Left lung (tissue), 14 donors: ENCODE measurements at regions of chr18 and their contacts with region 1.

Region 1: GRCh38 chr18:26548429-26549262 is at the start of gene KCTD1:
- DNase-seq: peak; percentile 76 to 87 (median 86)
- ATAC-seq: peak; percentile 58
- H3K4me3 ChIP-seq: peak within 1 kb of the TSS; percentile 60 to 67
- H3K27ac ChIP-seq: peak within 1 kb of the TSS; percentile 40 to 76
- H3K4me1 ChIP-seq: peaks cover 17 to 46% of the 10 kb centered on the region in 2 donors
- H3K27me3 ChIP-seq: peaks cover 31 to 69% of the 10 kb centered on the region in 2 donors
- CTCF ChIP-seq: no peak
- polyA plus RNA-seq, gene KCTD1: 15.0 to 20.8 (median 16.8) TPM

Region 2: DNA sequence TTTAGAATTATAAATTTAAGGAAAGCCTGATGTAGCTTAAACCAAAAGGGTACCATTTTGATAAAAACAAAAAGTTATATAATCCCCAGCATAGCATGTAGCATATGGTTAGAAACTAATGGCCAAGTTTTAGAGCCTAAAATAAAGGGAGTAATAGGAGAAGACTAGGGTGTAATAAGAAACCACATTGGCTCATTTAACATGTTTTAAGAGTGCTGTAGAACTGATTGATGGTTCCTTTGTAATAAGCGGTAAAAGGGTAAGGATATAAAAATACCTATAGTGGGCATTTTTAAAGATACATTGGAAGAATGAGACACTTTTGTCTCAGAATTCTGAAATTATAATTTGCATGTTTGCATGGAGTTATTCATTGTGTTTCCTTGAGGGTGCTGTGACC is 413.1 kb before region 1 on chr18:
- intact Hi-C with region 1: no loop called
- DNase-seq: no peak
- ATAC-seq: no peak
- H3K4me3 ChIP-seq: no peak overlapping the region
- H3K27ac ChIP-seq: no peak overlapping the region
- H3K4me1 ChIP-seq: no peaks in the 10 kb centered on the region
- H3K27me3 ChIP-seq: no peaks in the 10 kb centered on the region
- CTCF ChIP-seq: no peak

Region 3: DNA sequence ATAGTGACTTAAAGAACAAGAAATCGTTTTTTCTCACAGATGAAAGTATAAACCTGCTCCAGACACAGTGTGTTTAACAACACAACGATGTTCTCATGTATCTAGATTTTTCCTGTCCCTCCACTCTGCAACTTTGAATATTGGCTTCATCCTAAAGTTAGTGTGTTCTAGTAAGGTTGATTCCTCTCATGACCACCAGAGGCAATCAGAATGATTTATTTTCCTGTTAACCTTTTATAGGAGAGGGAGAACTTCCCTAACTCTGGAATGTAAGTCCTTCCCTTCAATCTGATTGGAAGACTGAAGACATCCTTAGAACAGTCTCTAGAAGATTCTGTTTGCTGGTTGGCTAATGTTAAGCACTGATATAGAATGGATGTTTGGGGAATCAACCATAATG is 363.4 kb before region 1 on chr18:
- intact Hi-C with region 1: no loop called
- DNase-seq: no peak
- ATAC-seq: no peak
- H3K4me3 ChIP-seq: no peak overlapping the region
- H3K27ac ChIP-seq: no peak overlapping the region
- H3K4me1 ChIP-seq: no peaks in the 10 kb centered on the region
- H3K27me3 ChIP-seq: no peaks in the 10 kb centered on the region
- CTCF ChIP-seq: no peak

Region 4: GRCh38 chr18:26656944-26657536 is 108.4 kb after region 1 on chr18:
- intact Hi-C with region 1: loop called in 1 of 2 experiments (anchors 10 kb)
- DNase-seq: peak; percentile 63 to 95 (median 81)
- ATAC-seq: peak; percentile 79
- H3K4me3 ChIP-seq: peak overlapping the region; percentile 52 to 60
- H3K27ac ChIP-seq: peak overlapping the region; percentile 71 to 79
- H3K4me1 ChIP-seq: peaks cover 16 to 22% of the 10 kb centered on the region in 2 donors
- H3K27me3 ChIP-seq: peaks cover 7 to 95% of the 10 kb centered on the region in 2 donors
- CTCF ChIP-seq: peak; percentile 17 to 42